Left ventricle myocardium superior (tissue), 1 donor: ENCODE measurements at regions of chr4 and their contacts with region 1.

Region 1: DNA sequence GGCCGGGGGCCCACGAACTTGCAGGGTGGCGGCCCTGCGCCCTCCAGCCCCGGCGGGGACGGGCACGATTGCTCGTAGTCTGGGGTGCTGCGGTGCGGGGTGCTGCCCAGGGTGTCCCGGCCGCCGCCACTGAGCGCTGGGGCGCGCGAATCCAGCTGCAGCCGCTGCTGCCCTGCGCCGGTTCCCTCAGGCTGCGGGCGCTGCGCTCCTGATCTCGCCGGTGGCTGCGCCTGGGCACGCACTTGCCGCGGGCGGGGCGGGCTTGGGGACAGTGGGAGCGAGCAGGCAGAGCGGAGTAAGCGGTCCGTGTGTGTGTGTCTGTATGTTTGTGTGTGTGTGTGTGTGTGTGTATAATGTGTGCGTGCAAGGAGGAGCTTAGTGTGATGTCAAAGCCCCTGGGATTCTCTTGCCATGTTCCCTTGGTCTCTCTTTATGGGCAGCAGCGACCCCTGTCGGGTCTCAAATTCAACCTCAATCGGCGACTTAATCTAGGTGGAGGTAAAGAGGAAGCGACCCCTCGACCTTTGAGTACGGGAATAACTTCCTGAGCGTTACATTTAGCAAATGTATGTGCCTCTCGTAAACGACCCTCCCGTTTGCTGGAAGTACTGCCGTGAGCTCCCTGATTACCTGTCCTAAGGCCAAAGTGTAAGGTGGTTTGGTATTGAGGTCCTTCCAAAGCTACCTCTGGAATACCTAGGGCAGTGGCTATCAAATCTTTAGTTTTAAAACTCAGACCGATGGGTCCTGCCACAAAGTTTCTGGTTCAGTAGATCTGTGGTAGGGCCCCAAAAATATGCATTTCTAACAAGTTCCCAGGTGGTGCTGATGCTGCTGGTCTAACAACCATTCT is at the start of gene RNF150:
- DNase-seq: peak; percentile 83
- ATAC-seq: peak; percentile 82
- total RNA-seq, gene RNF150: 57.1 TPM

Region 2: GRCh38 chr4:140504261-140504660 is 629.1 kb before region 1 on chr4:
- intact Hi-C with region 1: no loop called
- DNase-seq: no peak
- ATAC-seq: no peak

Region 3: GRCh38 chr4:140865253-140866217 is 267.8 kb before region 1 on chr4:
- intact Hi-C with region 1: loop called (anchors 5 kb)
- DNase-seq: no peak
- ATAC-seq: no peak

Region 4: GRCh38 chr4:141473952-141474351 is 340.6 kb after region 1 on chr4:
- intact Hi-C with region 1: no loop called
- DNase-seq: no peak
- ATAC-seq: no peak